ENCODE measurements at regions of chrX and their contacts with region 1.

Region 1: GRCh38 chrX:54747733-54748393 is 50.2 kb downstream of the ITIH6 start:
- DNase-seq: no peak
- ATAC-seq: no peak
- H3K4me3 ChIP-seq: peak overlapping the region; percentile 52 to 58 (median 57)
- H3K27ac ChIP-seq: peak overlapping the region; percentile 75 to 88 (median 86)
- H3K4me1 ChIP-seq: peaks cover 2 to 3% of the 10 kb centered on the region in 2 donors
- H3K27me3 ChIP-seq: no peaks in the 10 kb centered on the region
- CTCF ChIP-seq: no peak
- POLR2A ChIP-seq: no peak

Region 2: GRCh38 chrX:54301516-54301915 is 446.3 kb before region 1 on chrX:
- in situ Hi-C with region 1: no loop called
- intact Hi-C with region 1: no loop called
- DNase-seq: no peak
- ATAC-seq: no peak
- H3K4me3 ChIP-seq: no peak overlapping the region
- H3K27ac ChIP-seq: no peak overlapping the region
- H3K4me1 ChIP-seq: no peaks in the 10 kb centered on the region
- H3K27me3 ChIP-seq: no peaks in the 10 kb centered on the region
- CTCF ChIP-seq: no peak
- POLR2A ChIP-seq: no peak

Region 3: GRCh38 chrX:54786962-54787361 is 39.1 kb after region 1 on chrX:
- in situ Hi-C with region 1: no loop called
- intact Hi-C with region 1: loop called (anchors 5 kb)
- DNase-seq: no peak
- ATAC-seq: peak; percentile 34 to 53
- H3K4me3 ChIP-seq: no peak overlapping the region
- H3K27ac ChIP-seq: no peak overlapping the region
- H3K4me1 ChIP-seq: peaks cover 0 to 4% of the 10 kb centered on the region in 2 donors
- H3K27me3 ChIP-seq: no peaks in the 10 kb centered on the region
- CTCF ChIP-seq: peak in 3 of 5 experiments; percentile 28 to 34 (median 34)
- POLR2A ChIP-seq: no peak

Measured in gastrocnemius medialis (tissue), 4 donors.